ENCODE measurements at regions of chr5 and their contacts with region 1.

Region 1: GRCh38 chr5:69093771-69094482 is at the start of gene SLC30A5:
- DNase-seq: peak; percentile 99
- H3K4me3 ChIP-seq: peak within 1 kb of the TSS; percentile 85 to 92
- H3K27ac ChIP-seq: peak within 1 kb of the TSS; percentile 93 to 96
- H3K4me1 ChIP-seq: peaks cover 7% of the 10 kb centered on the region
- H3K27me3 ChIP-seq: no peaks in the 10 kb centered on the region
- CTCF ChIP-seq: peak; percentile 84 to 98 (median 96)
- POLR2A ChIP-seq: peak; percentile 94
- total RNA-seq, gene SLC30A5: 72.2 to 79.3 TPM

Region 2: GRCh38 chr5:69166686-69167492 is 73.0 kb after region 1 on chr5 and contains the start of gene CCNB1:
- intact Hi-C with region 1: loop called (anchors 5 kb)
- DNase-seq: peak; percentile 97
- H3K4me3 ChIP-seq: peak within 1 kb of the TSS; percentile 44 to 49
- H3K27ac ChIP-seq: peak within 1 kb of the TSS in 1 of 2 donors; percentile 20
- H3K4me1 ChIP-seq: peaks cover 4% of the 10 kb centered on the region
- H3K27me3 ChIP-seq: no peaks in the 10 kb centered on the region
- CTCF ChIP-seq: peak in 2 of 4 experiments; percentile 41 to 46
- POLR2A ChIP-seq: peak; percentile 39
- total RNA-seq, gene CCNB1: 9.7 to 24.3 TPM

Region 3: GRCh38 chr5:69217548-69218526 is 123.9 kb after region 1 on chr5:
- intact Hi-C with region 1: loop called (anchors 10 kb)
- DNase-seq: peak; percentile 96
- H3K4me3 ChIP-seq: peak overlapping the region; percentile 77 to 91
- H3K27ac ChIP-seq: peak overlapping the region; percentile 86 to 87
- H3K4me1 ChIP-seq: peaks cover 4% of the 10 kb centered on the region
- H3K27me3 ChIP-seq: no peaks in the 10 kb centered on the region
- CTCF ChIP-seq: peak in 3 of 4 experiments; percentile 15 to 65 (median 57)
- POLR2A ChIP-seq: peak; percentile 86

Measured in prostate gland (tissue), 2 donors.